MCF 10A (cell line): ENCODE measurements at regions of chrX and their contacts with region 1.

Region 1: DNA sequence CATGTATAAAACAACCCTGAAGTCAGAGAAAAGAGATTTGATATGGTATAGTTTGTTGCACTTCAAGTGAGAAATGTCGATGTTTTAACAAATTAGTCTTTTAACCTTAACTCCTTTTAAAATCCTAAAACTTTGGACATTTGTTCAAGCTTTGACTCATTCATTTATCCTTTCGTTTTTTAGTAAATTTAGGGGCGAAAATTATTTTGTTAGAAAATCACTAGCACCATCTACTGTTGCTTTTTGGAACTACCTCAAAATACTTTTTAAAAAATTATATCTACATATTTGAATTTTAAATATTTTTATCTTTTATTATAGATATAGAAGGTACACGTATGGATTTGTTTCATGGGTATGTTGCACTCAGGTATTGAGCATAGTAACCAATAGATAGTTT is 165.1 kb upstream of the POF1B start:
- DNase-seq: peak; percentile 8
- H3K4me3 Mint-ChIP-seq: no peak overlapping the region
- H3K27ac Mint-ChIP-seq: no peak overlapping the region
- H3K4me1 Mint-ChIP-seq: no peaks in the 10 kb centered on the region
- H3K27me3 Mint-ChIP-seq: peaks cover 12% of the 10 kb centered on the region
- CTCF ChIP-seq: peak; percentile 38

Region 2: GRCh38 chrX:85084770-85085393 is 459.7 kb before region 1 on chrX:
- CTCF ChIA-PET with region 1: interaction called, 4 read pairs
- POLR2A ChIA-PET with region 1: no interaction called
- intact Hi-C with region 1: loop called (anchors 10 kb)
- DNase-seq: peak; percentile 44
- H3K4me3 Mint-ChIP-seq: no peak overlapping the region
- H3K27ac Mint-ChIP-seq: no peak overlapping the region
- H3K4me1 Mint-ChIP-seq: no peaks in the 10 kb centered on the region
- H3K27me3 Mint-ChIP-seq: peaks cover 23% of the 10 kb centered on the region
- CTCF ChIP-seq: peak; percentile 76

Region 3: GRCh38 chrX:85111347-85111746 is 433.3 kb before region 1 on chrX:
- CTCF ChIA-PET with region 1: interaction called, 52 read pairs
- POLR2A ChIA-PET with region 1: interaction called, 5 read pairs
- intact Hi-C with region 1: loop called (anchors 1 kb)
- DNase-seq: peak; percentile 30
- H3K4me3 Mint-ChIP-seq: no peak overlapping the region
- H3K27ac Mint-ChIP-seq: no peak overlapping the region
- H3K4me1 Mint-ChIP-seq: no peaks in the 10 kb centered on the region
- H3K27me3 Mint-ChIP-seq: no peaks in the 10 kb centered on the region
- CTCF ChIP-seq: peak; percentile 59

Region 4: DNA sequence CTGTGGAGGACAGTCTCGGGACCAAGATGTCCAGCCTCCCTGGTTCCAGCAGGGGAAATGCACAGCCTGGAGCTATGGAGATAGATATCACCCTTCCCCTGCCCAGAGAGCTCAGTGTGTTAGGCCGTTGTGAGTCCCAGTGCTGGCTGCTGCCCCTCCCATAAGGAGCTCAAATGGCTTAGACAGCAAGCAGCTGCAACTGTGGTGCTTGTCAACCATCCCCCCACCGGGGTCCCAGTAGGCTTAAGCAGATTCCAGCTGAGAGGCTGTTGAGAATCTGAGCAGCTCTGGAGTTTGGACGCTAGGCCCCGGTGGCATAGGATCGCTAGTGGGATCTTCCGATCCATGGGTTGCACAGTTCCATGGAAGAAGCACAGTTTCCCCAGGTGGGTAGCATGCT is 16.6 kb after region 1 on chrX:
- CTCF ChIA-PET with region 1: no interaction called
- POLR2A ChIA-PET with region 1: no interaction called
- intact Hi-C with region 1: no loop called
- DNase-seq: no peak
- H3K4me3 Mint-ChIP-seq: no peak overlapping the region
- H3K27ac Mint-ChIP-seq: no peak overlapping the region
- H3K4me1 Mint-ChIP-seq: no peaks in the 10 kb centered on the region
- H3K27me3 Mint-ChIP-seq: peaks cover 26% of the 10 kb centered on the region
- CTCF ChIP-seq: no peak